ENCODE measurements at regions of chr12 and their contacts with region 1.

Region 1: DNA sequence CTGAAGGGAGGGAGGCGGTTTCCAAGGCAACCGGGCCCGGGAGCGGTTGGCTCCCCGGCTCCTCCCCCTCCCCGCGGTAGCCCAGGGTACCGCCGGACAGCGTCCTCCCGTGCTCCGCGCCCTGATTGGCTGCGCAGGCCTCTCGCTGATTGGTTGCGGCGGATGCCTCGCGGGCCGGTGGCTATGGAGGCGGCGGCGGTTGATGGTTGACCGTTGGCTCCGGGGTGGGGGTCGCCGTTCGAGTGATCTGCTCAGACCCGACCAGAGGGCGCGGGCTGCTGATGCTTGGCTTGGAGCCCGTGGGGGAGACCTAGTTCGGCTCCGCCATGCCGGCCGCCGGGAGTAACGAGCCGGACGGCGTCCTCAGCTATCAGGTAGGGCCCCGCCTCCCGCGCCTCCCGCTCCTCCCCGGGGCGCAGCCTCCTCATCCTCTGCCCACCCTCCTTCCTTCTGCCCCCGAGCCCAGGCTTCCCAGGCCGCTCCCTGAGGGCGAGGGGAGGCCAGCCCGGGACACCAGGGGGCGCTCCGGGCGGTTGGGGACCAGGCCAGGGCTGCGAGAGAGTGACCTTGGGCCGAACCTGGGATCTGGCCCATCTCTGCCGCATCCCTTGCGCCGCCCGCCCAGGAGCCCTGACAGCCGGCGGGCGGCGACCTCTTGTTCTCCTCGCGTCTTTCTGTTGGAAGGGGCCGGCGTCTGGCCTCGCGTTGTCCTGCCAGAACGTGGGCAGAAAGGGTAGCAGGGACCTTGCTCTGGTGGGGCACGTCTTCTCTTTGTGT is at the start of gene SLC4A8:
- DNase-seq: no peak
- H3K4me3 ChIP-seq: peak within 1 kb of the TSS; percentile 85
- CTCF ChIP-seq: peak; percentile 94

Region 2: GRCh38 chr12:51028126-51028810 is 396.6 kb before region 1 on chr12:
- CTCF ChIA-PET with region 1: no interaction called
- POLR2A ChIA-PET with region 1: no interaction called
- DNase-seq: no peak
- H3K4me3 ChIP-seq: no peak overlapping the region
- CTCF ChIP-seq: peak; percentile 2

Region 3: DNA sequence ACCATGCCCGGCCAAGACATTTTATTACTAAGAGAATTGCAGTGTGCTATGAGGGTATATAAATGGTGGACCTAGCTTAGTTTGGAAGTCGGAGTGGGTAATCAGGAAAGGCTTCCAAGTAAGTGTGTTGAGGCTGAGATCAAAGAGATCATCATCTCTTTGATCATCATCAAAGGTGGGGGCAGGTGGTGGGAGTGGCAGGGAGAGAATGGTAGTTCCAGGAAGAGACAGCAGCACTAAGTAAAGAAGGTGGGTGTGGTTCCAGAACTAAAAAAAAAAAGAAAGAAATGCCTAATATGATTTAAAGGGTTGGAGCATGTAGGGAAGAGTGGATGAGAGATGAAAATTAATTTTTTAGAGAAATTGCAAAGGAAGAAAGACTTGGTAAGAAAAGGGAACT is 14.5 kb after region 1 on chr12:
- CTCF ChIA-PET with region 1: interaction called, 10 read pairs
- POLR2A ChIA-PET with region 1: no interaction called
- DNase-seq: no peak
- H3K4me3 ChIP-seq: no peak overlapping the region
- CTCF ChIP-seq: no peak

Region 4: DNA sequence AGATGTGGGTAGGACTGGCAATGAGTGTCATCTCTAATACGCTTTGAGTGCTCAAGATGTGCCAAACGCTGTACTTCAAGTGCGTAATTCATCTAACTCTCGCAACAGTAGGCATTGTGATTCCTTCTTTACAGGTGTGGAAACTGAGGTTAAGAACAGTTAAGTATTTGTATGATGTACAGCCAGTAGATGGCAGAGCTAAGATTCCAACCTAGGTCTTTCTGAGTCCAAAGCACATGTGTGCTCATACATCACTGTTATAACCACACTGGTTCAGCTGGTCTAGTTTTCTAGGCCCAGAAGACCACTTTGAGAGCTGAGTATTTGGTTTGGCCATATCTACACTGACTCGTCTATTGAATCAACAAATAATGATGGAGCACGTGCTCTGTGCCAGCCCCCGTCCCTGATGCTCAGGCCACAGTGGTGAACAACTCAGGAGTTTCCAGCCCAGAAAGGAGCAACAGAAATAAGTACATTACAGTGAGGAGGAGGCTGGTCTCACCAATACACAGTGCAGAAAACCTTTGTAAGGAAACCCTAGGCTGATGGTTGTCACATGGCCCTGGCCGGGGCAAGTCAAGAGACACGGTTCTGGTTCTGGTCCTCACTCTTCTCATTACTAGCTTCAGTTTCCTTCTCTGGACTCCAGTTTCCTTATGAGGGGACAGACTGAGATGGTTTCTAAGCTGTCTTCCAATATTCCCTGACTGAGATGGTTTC is 96.9 kb after region 1 on chr12:
- CTCF ChIA-PET with region 1: interaction called, 234 read pairs
- POLR2A ChIA-PET with region 1: no interaction called
- DNase-seq: no peak
- H3K4me3 ChIP-seq: no peak overlapping the region
- CTCF ChIP-seq: peak; percentile 22

Region 5: GRCh38 chr12:51531978-51532497 is 107.2 kb after region 1 on chr12:
- CTCF ChIA-PET with region 1: interaction called, 234 read pairs
- POLR2A ChIA-PET with region 1: no interaction called
- DNase-seq: peak; percentile 21
- H3K4me3 ChIP-seq: no peak overlapping the region
- CTCF ChIP-seq: peak; percentile 92

Region 6: DNA sequence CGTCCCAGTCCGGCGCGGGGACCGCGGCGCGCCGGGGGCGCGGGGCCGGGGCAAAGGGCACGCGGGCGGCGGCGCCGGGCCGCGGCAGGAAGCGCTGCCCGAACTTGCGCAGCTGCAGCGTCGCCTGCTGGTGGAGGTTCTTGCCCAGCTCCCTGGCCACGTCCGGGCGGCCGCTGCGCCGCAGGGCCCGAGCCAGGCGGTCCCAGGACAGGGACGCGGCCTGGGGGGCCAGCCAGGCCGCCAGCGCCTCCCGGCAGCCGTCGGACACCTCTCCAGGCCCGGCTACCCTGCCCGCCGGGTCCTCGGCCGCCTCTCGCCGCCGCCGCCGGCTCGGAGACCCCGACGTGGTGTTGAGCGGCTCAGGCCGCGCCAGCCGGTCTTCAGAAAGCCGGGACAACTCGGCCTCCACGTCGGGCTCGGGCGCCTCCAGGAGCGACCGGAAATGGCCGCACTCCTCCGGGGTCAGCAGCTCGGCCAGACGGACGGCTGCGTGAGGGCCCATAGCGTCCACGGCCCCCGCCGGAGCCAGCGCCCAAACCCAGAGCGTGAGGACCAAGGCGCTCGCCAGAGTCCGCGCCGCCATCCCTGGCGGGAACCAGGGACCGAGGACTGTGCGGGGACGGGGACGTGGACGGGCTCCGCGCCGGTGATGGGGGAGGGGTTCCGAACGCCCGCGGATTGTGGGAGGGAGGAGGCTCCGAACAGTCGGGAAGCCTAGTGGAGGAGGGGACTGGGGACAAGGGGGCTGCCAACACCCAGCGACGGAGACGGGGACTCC is 389.6 kb after region 1 on chr12:
- CTCF ChIA-PET with region 1: interaction called, 31 read pairs
- POLR2A ChIA-PET with region 1: no interaction called
- DNase-seq: no peak
- H3K4me3 ChIP-seq: peak overlapping the region; percentile 52
- CTCF ChIP-seq: peak; percentile 84

Region 7: GRCh38 chr12:51871126-51871525 is 446.3 kb after region 1 on chr12:
- CTCF ChIA-PET with region 1: interaction called, 147 read pairs
- POLR2A ChIA-PET with region 1: no interaction called
- DNase-seq: no peak
- H3K4me3 ChIP-seq: no peak overlapping the region
- CTCF ChIP-seq: no peak

Region 8: DNA sequence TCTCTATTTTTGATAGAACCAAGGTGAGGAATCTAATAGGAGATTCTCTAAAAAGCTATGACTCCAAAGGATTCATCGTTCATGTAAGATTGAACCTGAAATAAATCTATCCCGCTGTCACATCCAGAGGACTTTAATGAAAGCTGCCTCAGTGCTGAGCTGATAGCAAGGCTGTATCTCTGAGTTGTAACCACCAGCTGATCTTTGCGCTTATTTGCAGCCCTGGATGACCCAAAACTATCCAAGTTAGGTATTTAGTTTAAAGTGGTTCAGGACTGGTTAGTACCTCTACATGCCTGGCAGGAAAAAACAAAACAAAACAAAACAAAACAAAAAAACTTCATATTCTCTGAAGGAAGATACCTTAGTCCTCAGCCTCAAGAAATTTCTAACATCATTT is 454.3 kb after region 1 on chr12:
- CTCF ChIA-PET with region 1: interaction called, 147 read pairs
- POLR2A ChIA-PET with region 1: no interaction called
- DNase-seq: no peak
- H3K4me3 ChIP-seq: no peak overlapping the region
- CTCF ChIP-seq: no peak

Measured in AG04449 (cell line).